Activated B cell treated with CpG ODN at 0.5 μM for 24 hours (primary cell): ENCODE measurements at regions of chr5 and their contacts with region 1.

Region 1: GRCh38 chr5:124572971-124573370 is 173.5 kb downstream of the ZNF608 start:
- DNase-seq: no peak
- ATAC-seq: no peak
- H3K4me3 Mint-ChIP-seq: no peak overlapping the region
- H3K27ac Mint-ChIP-seq: no peak overlapping the region
- H3K4me1 Mint-ChIP-seq: peaks cover 19% of the 10 kb centered on the region
- H3K27me3 Mint-ChIP-seq: no peaks in the 10 kb centered on the region
- CTCF ChIP-seq: no peak

Region 2: GRCh38 chr5:124530916-124531315 is 42.1 kb before region 1 on chr5:
- CTCF ChIA-PET with region 1: no interaction called
- POLR2A ChIA-PET with region 1: no interaction called
- intact Hi-C with region 1: loop called (anchors 2 kb)
- DNase-seq: no peak
- ATAC-seq: no peak
- H3K4me3 Mint-ChIP-seq: no peak overlapping the region
- H3K27ac Mint-ChIP-seq: no peak overlapping the region
- H3K4me1 Mint-ChIP-seq: peaks cover 18% of the 10 kb centered on the region
- H3K27me3 Mint-ChIP-seq: peaks cover 6% of the 10 kb centered on the region
- CTCF ChIP-seq: no peak